Activated CD4-positive, alpha-beta memory T cell treated with anti-CD3 and anti-CD28 coated beads, Interleukin-2, amount 10 ng/mL, durations not matched to agents 7 days and 5 days (primary cell): ENCODE measurements at regions of chr1 and their contacts with region 1.

Region 1: DNA sequence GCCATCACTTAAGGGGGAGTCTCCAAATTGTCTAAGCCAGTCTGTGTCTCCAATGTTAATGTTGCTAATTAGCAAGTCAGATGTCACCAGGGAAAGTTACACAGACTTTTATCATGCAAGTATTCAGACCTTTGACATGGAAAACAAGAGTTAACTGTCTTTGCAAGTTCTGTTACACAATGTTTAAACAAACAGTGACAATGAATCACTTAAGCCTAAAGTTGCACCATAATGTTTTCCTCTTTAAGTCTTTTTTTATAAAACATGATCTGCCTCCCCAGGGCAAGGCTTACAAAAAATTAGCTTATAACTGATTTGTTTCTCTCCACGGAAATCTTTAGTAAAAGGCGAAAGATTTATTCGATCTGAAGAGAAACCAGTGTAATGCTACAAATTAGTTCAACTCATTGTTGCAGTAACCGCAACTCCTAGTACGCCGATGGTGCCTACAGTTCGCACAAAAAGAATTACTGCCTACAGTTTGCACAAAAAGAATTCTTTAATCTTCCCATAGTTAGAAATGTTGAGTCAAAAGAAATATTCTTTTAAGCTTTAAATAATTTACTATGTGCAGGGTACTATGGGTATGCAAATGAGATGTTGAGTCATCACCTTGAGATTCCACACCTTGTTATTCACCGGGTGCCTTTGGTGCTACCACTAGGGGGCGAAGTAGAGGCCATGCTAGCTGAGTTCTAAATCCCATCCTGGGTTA is 45.3 kb downstream of the HHAT start:
- DNase-seq: peak; percentile 77
- H3K4me3 Mint-ChIP-seq: no peak overlapping the region
- H3K27ac Mint-ChIP-seq: peak overlapping the region; percentile 72
- H3K4me1 Mint-ChIP-seq: peaks cover 19% of the 10 kb centered on the region
- H3K27me3 Mint-ChIP-seq: peaks cover 9% of the 10 kb centered on the region

Region 2: GRCh38 chr1:210074904-210075303 is 299.1 kb before region 1 on chr1:
- CTCF ChIA-PET with region 1: no interaction called
- POLR2A ChIA-PET with region 1: no interaction called
- DNase-seq: no peak
- H3K4me3 Mint-ChIP-seq: no peak overlapping the region
- H3K27ac Mint-ChIP-seq: no peak overlapping the region
- H3K4me1 Mint-ChIP-seq: no peaks in the 10 kb centered on the region
- H3K27me3 Mint-ChIP-seq: no peaks in the 10 kb centered on the region

Region 3: DNA sequence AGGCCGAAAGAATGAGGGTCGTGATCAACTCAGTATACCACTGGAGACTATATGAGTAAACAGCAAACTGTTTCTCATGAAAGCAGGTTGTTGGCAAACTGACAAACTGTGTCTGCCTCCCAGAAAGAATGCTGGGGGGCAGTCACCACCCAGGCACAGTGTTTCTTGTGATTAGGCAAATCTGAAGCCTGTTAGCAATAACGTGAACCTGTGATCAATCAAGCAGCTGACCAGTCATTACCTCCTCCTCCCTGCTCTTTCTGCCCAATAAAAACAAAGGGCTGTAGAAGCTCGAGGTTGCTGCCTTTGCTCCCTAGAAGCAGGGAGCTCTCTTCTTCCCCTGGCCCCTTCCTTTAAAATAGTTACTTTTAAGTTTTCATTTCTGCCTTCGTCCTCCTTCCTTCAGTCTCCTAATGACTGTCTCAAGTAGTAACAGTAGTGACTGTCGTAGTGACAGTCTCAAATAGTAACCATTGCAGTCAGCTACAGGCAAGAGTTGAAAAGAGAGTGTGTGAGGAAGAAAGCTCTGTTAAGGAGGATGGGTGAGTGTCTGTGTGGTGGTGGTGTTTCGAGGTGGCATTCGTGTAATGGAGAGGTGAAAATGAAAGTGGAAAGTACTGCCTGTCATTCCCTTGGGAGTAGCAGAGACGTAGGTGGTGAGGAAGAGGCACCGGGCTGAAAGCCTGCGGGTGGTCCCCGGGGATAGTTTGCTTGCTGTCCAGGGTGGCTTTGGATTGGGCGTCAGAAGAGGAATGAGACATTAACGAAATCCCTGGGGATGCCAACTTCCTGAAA is 30.9 kb before region 1 on chr1:
- CTCF ChIA-PET with region 1: interaction called, 29 read pairs
- POLR2A ChIA-PET with region 1: interaction called, 37 read pairs
- DNase-seq: no peak
- H3K4me3 Mint-ChIP-seq: no peak overlapping the region
- H3K27ac Mint-ChIP-seq: no peak overlapping the region
- H3K4me1 Mint-ChIP-seq: peaks cover 24% of the 10 kb centered on the region
- H3K27me3 Mint-ChIP-seq: peaks cover 8% of the 10 kb centered on the region

Region 4: DNA sequence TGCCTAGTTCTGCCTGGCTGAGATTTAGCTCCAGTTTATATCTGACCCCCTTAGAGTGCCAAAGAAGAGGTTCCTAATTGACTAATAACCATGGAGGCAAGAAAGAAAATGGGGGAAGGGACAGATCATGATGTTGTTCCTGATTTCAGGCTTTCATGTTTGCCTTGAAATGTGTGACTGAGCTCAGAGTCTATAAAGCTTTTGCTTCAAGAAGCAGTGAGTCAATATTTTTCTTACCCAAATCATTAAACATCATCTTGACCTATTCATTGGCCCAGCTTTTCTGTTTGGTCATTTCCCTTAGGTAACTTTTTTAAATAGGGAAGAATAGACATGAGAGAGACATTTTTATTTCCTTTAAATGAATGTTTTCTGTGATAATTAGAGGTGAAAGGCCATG is 10.6 kb after region 1 on chr1:
- CTCF ChIA-PET with region 1: interaction called, 23 read pairs
- POLR2A ChIA-PET with region 1: interaction called, 16 read pairs
- DNase-seq: no peak
- H3K4me3 Mint-ChIP-seq: no peak overlapping the region
- H3K27ac Mint-ChIP-seq: no peak overlapping the region
- H3K4me1 Mint-ChIP-seq: no peaks in the 10 kb centered on the region
- H3K27me3 Mint-ChIP-seq: peaks cover 4% of the 10 kb centered on the region

Region 5: GRCh38 chr1:210407207-210407886 is 33.3 kb after region 1 on chr1:
- CTCF ChIA-PET with region 1: interaction called, 32 read pairs
- POLR2A ChIA-PET with region 1: interaction called, 15 read pairs
- DNase-seq: peak; percentile 74
- H3K4me3 Mint-ChIP-seq: no peak overlapping the region
- H3K27ac Mint-ChIP-seq: no peak overlapping the region
- H3K4me1 Mint-ChIP-seq: no peaks in the 10 kb centered on the region
- H3K27me3 Mint-ChIP-seq: peaks cover 10% of the 10 kb centered on the region

Region 6: GRCh38 chr1:210467440-210468043 is 93.5 kb after region 1 on chr1:
- CTCF ChIA-PET with region 1: no interaction called
- POLR2A ChIA-PET with region 1: no interaction called
- DNase-seq: no peak
- H3K4me3 Mint-ChIP-seq: no peak overlapping the region
- H3K27ac Mint-ChIP-seq: no peak overlapping the region
- H3K4me1 Mint-ChIP-seq: peaks cover 13% of the 10 kb centered on the region
- H3K27me3 Mint-ChIP-seq: peaks cover 29% of the 10 kb centered on the region

Region 7: GRCh38 chr1:210663730-210664573 is 289.9 kb after region 1 on chr1:
- CTCF ChIA-PET with region 1: no interaction called
- POLR2A ChIA-PET with region 1: no interaction called
- DNase-seq: no peak
- H3K4me3 Mint-ChIP-seq: no peak overlapping the region
- H3K27ac Mint-ChIP-seq: no peak overlapping the region
- H3K4me1 Mint-ChIP-seq: no peaks in the 10 kb centered on the region
- H3K27me3 Mint-ChIP-seq: no peaks in the 10 kb centered on the region